ENCODE measurements at regions of chr21 and their contacts with region 1.

Region 1: DNA sequence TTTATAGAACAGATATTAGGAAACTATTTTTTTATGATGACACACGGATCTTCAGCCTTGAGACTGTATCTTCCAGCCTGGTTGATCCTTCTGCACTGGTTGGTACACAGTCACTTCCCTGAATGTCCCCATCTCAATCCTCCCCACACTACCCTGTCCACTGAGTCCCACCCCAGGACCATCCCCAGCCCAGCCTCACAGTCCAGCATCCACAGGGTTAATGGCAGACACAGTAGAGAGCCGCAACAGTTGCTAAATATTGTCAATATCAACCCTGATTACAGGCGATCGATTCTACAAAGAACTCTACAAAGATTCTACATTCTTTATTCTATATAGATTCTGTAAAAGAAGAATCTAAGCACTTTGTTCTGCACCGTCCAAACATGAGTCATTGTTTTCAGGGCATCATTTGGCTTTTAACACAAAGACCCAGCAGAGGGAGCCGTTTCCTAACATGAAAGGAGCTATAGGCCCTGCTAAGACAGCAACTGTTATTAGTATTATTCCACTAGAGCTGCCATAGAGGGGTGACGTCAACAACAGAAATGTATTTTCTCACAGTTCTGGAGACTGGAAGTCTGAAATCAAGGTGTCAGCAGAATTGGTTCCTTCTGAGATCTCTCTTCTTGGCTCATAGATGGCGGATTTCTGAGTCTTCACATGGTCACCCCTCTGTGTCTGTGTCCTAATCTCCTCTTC is 30.1 kb upstream of the IFNAR2 start:
- DNase-seq: peak; percentile 31 to 88 (median 81)
- ATAC-seq: peak; percentile 91
- H3K4me3 ChIP-seq: no peak overlapping the region
- H3K4me3 Mint-ChIP-seq: no peak overlapping the region
- H3K27ac ChIP-seq: no peak overlapping the region
- H3K27ac Mint-ChIP-seq: peak overlapping the region in 7 of 9 donors; percentile 22 to 87 (median 52)
- H3K4me1 ChIP-seq: peaks cover under 1 to 9% of the 10 kb centered on the region in 2 donors
- H3K4me1 Mint-ChIP-seq: peaks cover 24 to 53% (median 42%) of the 10 kb centered on the region in 7 donors
- H3K27me3 ChIP-seq: no peaks in the 10 kb centered on the region
- H3K27me3 Mint-ChIP-seq: peaks cover 0 to 31% (median 0%) of the 10 kb centered on the region in 5 donors

Region 2: GRCh38 chr21:31795992-31796391 is 1403.7 kb before region 1 on chr21:
- CTCF ChIA-PET with region 1: no interaction called
- POLR2A ChIA-PET with region 1: no interaction called
- intact Hi-C with region 1: no loop called
- DNase-seq: no peak
- ATAC-seq: no peak
- H3K4me3 ChIP-seq: no peak overlapping the region
- H3K4me3 Mint-ChIP-seq: no peak overlapping the region
- H3K27ac ChIP-seq: no peak overlapping the region
- H3K27ac Mint-ChIP-seq: no peak overlapping the region
- H3K4me1 ChIP-seq: no peaks in the 10 kb centered on the region
- H3K4me1 Mint-ChIP-seq: no peaks in the 10 kb centered on the region
- H3K27me3 ChIP-seq: no peaks in the 10 kb centered on the region
- H3K27me3 Mint-ChIP-seq: peaks cover 2 to 28% (median 15%) of the 10 kb centered on the region in 5 donors

Region 3: DNA sequence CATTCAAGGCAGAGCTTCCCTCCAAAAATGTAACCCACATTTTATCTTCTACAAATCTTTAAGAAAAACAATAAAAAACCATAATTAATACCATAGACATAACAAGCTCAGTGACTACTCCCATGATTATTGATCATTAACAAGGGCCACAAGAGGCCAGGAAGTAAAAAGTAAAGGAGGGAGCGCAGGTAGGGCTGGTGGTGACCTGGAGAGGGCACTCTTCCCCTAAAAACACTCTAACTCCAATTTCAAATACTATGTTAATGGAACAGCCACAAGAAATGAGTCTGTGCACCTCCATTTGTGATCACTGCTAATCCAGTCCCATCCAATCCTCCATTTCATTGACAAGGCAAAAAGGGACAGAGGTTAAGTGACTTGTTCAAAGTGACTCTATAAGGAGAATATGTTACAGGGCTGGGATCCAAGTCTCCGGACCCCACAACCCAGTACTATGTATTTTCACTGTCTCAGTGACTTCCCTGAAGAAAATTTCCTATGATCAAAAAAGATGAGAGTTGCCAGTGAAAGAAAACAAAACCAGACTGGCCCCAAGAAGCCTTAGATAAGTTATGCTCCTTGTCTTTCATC is 546.3 kb before region 1 on chr21:
- CTCF ChIA-PET with region 1: no interaction called
- POLR2A ChIA-PET with region 1: no interaction called
- intact Hi-C with region 1: loop called (anchors 1 to 2 kb)
- DNase-seq: peak in 7 of 9 donors; percentile 8 to 40 (median 28)
- ATAC-seq: peak; percentile 64
- H3K4me3 ChIP-seq: no peak overlapping the region
- H3K4me3 Mint-ChIP-seq: no peak overlapping the region
- H3K27ac ChIP-seq: no peak overlapping the region
- H3K27ac Mint-ChIP-seq: no peak overlapping the region
- H3K4me1 ChIP-seq: no peaks in the 10 kb centered on the region
- H3K4me1 Mint-ChIP-seq: peaks cover 0 to 12% (median 0%) of the 10 kb centered on the region in 7 donors
- H3K27me3 ChIP-seq: no peaks in the 10 kb centered on the region
- H3K27me3 Mint-ChIP-seq: no peaks in the 10 kb centered on the region

Region 4: GRCh38 chr21:32940079-32941014 is 259.3 kb before region 1 on chr21:
- CTCF ChIA-PET with region 1: interaction called, 39 read pairs
- POLR2A ChIA-PET with region 1: no interaction called
- intact Hi-C with region 1: loop called (anchors 1 kb)
- DNase-seq: peak in 8 of 9 donors; percentile 23 to 53 (median 40)
- ATAC-seq: peak; percentile 68
- H3K4me3 ChIP-seq: no peak overlapping the region
- H3K4me3 Mint-ChIP-seq: peak overlapping the region in 2 of 10 donors; percentile 28 to 45
- H3K27ac ChIP-seq: no peak overlapping the region
- H3K27ac Mint-ChIP-seq: no peak overlapping the region
- H3K4me1 ChIP-seq: no peaks in the 10 kb centered on the region
- H3K4me1 Mint-ChIP-seq: peaks cover 0 to 9% (median 6%) of the 10 kb centered on the region in 7 donors
- H3K27me3 ChIP-seq: no peaks in the 10 kb centered on the region
- H3K27me3 Mint-ChIP-seq: peaks cover 0 to 14% (median 0%) of the 10 kb centered on the region in 5 donors

Region 5: GRCh38 chr21:33185852-33186251 is 13.8 kb before region 1 on chr21:
- CTCF ChIA-PET with region 1: interaction called, 23 read pairs
- POLR2A ChIA-PET with region 1: interaction called, 15 read pairs
- intact Hi-C with region 1: loop called in 1 of 2 experiments (anchors 1 kb)
- DNase-seq: peak in 7 of 9 donors; percentile 40 to 75 (median 65)
- ATAC-seq: peak; percentile 94
- H3K4me3 ChIP-seq: peak overlapping the region; percentile 39
- H3K4me3 Mint-ChIP-seq: peak overlapping the region; percentile 45 to 86 (median 70)
- H3K27ac ChIP-seq: no peak overlapping the region
- H3K27ac Mint-ChIP-seq: peak overlapping the region; percentile 72 to 94 (median 90)
- H3K4me1 ChIP-seq: peaks cover 24 to 27% of the 10 kb centered on the region in 2 donors
- H3K4me1 Mint-ChIP-seq: peaks cover 27 to 70% (median 54%) of the 10 kb centered on the region in 7 donors
- H3K27me3 ChIP-seq: no peaks in the 10 kb centered on the region
- H3K27me3 Mint-ChIP-seq: peaks cover 0 to 21% (median 0%) of the 10 kb centered on the region in 5 donors

Region 6: GRCh38 chr21:33266050-33266788 is 66.6 kb after region 1 on chr21 and contains the start of gene IL10RB:
- CTCF ChIA-PET with region 1: no interaction called
- POLR2A ChIA-PET with region 1: interaction called, 3 read pairs
- intact Hi-C with region 1: loop called in 1 of 2 experiments (anchors 1 kb)
- DNase-seq: peak; percentile 53 to 80 (median 62)
- ATAC-seq: peak; percentile 88
- H3K4me3 ChIP-seq: peak within 1 kb of the TSS; percentile 87
- H3K4me3 Mint-ChIP-seq: peak within 1 kb of the TSS; percentile 86 to 99 (median 96)
- H3K27ac ChIP-seq: peak within 1 kb of the TSS; percentile 83
- H3K27ac Mint-ChIP-seq: peak within 1 kb of the TSS; percentile 91 to 97 (median 94)
- H3K4me1 ChIP-seq: peaks cover 23 to 38% of the 10 kb centered on the region in 2 donors
- H3K4me1 Mint-ChIP-seq: peaks cover 45 to 78% (median 57%) of the 10 kb centered on the region in 7 donors
- H3K27me3 ChIP-seq: no peaks in the 10 kb centered on the region
- H3K27me3 Mint-ChIP-seq: no peaks in the 10 kb centered on the region
- total RNA-seq, gene IL10RB: 17.6 to 35.0 (median 27.2) TPM

Region 7: DNA sequence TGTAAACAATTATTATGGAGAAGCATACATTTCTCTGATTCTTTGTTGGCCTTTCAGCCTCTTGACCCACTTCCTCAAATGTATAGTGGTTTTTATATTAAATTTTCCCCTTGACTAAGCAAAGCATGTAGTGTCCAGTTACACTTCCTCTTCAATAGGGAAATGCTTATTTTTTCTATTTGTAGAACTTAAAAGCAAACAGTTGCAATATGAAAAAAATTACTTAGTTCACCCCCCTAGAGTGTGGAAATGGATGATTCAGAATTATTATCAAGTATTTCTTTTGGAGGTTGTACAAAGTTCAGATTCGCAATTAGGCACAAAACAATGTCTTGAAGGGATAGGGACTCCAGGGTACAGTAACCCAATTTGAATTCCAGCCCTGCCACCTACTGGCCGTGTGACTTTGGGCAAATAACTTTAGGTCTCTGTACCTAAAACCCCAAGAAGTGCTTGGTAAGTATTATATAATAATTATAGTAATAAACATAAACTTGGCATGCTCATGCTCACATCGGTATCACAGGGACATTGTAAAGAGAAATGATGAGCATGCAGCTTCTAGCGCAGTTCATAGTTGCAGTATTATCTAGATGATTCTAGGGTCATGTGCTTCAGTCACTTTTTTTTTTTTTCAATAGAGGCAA is 174.9 kb after region 1 on chr21:
- CTCF ChIA-PET with region 1: interaction called, 12 read pairs
- POLR2A ChIA-PET with region 1: interaction called, 3 read pairs
- intact Hi-C with region 1: loop called (anchors 1 kb)
- DNase-seq: peak in 7 of 9 donors; percentile 25 to 61 (median 49)
- ATAC-seq: peak; percentile 88
- H3K4me3 ChIP-seq: no peak overlapping the region
- H3K4me3 Mint-ChIP-seq: no peak overlapping the region
- H3K27ac ChIP-seq: no peak overlapping the region
- H3K27ac Mint-ChIP-seq: peak overlapping the region in 2 of 9 donors; percentile 21 to 45
- H3K4me1 ChIP-seq: peaks cover 0 to 3% of the 10 kb centered on the region in 2 donors
- H3K4me1 Mint-ChIP-seq: peaks cover 6 to 23% (median 12%) of the 10 kb centered on the region in 7 donors
- H3K27me3 ChIP-seq: peaks cover 0 to 6% of the 10 kb centered on the region in 2 donors
- H3K27me3 Mint-ChIP-seq: peaks cover 0 to 36% (median 4%) of the 10 kb centered on the region in 5 donors

Measured in naive thymus-derived CD4-positive, alpha-beta T cell (primary cell).